Heart right ventricle (tissue), 16 donors: ENCODE measurements at regions of chr21 and their contacts with region 1.

Region 1: GRCh38 chr21:17819114-17819876 is at the start of gene C21orf91:
- DNase-seq: peak; percentile 92
- ATAC-seq: peak; percentile 97 to 100 (median 98)
- H3K4me3 ChIP-seq: peak within 1 kb of the TSS; percentile 81 to 98 (median 90)
- H3K27ac ChIP-seq: peak within 1 kb of the TSS; percentile 86 to 97 (median 92)
- H3K4me1 ChIP-seq: peaks cover 0 to 39% (median 30%) of the 10 kb centered on the region in 9 donors
- H3K27me3 ChIP-seq: no peaks in the 10 kb centered on the region
- CTCF ChIP-seq: no peak
- total RNA-seq, gene C21orf91: 6.2 to 18.9 (median 11.6) TPM

Region 2: DNA sequence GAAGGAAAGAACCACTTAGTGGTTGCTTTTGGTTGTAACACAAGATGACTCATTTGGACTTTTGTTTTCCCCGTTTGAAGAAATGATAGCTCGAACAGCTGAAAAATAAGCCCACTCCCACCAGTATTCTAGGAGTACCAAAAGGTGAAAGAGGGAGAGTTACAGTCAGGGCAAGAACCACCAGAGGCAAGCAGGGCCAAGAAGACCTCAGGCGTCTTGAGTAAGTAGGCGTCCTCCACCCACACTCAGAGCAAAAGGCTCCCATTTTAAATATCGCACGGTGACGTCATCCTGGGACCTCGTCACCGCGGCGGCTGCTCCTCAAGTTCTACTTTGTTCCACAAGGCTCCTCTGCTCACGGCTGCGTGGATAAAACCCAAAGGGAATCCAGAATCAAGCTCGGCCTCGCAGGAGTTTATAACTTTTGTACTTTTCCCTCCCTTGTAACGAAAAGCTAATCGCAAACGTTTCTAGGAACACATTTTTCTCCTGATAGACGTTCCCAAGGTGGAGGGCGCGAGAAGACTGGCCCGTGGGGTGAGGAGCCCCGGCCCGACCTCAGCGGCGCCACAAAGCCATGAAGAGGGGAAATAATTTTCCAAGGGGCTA is 207.8 kb before region 1 on chr21:
- intact Hi-C with region 1: loop called in 2 of 10 experiments (anchors 10 kb)
- DNase-seq: peak; percentile 59 to 81
- ATAC-seq: peak; percentile 57 to 90 (median 76)
- H3K4me3 ChIP-seq: peak overlapping the region; percentile 78 to 92 (median 84)
- H3K27ac ChIP-seq: peak overlapping the region in 9 of 10 donors; percentile 47 to 91 (median 85)
- H3K4me1 ChIP-seq: peaks cover 0 to 24% (median 11%) of the 10 kb centered on the region in 9 donors
- H3K27me3 ChIP-seq: peaks cover 0 to 2% (median 0%) of the 10 kb centered on the region in 7 donors
- CTCF ChIP-seq: peak in 1 of 9 donors; percentile 5

Region 3: DNA sequence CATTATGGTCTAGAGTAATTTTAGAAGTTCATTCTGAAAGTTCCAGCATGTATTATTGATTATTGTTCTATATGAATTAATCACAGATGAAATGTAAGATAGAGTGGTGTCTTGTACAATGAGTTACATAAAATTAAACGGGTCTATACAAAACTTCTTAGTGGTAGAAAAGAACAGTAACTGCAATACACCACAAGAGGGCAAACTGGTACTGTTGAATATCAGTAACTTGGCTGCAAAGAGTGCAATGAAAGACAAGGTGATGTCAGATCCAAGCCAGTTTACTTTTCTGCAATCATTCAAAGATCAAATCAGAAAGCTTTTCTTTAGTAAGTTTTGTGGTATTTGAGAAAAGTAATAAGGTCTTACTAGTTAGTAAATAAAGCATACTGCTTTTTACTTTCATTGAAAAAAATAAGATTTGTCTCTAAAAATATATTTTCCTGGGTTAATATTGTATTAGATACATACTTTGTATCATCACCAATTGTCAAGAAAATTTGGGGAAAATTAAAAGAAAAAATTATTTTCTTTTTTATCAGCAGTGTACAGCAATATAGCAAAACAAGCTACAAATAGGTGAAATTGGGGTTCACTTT is 140.2 kb before region 1 on chr21:
- intact Hi-C with region 1: loop called in 3 of 10 experiments (anchors 5 to 10 kb)
- DNase-seq: no peak
- ATAC-seq: peak in 7 of 8 donors; percentile 71 to 87 (median 78)
- H3K4me3 ChIP-seq: no peak overlapping the region
- H3K27ac ChIP-seq: no peak overlapping the region
- H3K4me1 ChIP-seq: no peaks in the 10 kb centered on the region
- H3K27me3 ChIP-seq: no peaks in the 10 kb centered on the region
- CTCF ChIP-seq: peak; percentile 65 to 91 (median 85)

Region 4: GRCh38 chr21:17688912-17689874 is 130.1 kb before region 1 on chr21:
- intact Hi-C with region 1: loop called in 4 of 10 experiments (anchors 5 to 10 kb)
- DNase-seq: peak; percentile 35 to 44
- ATAC-seq: peak in 5 of 8 donors; percentile 37 to 79 (median 73)
- H3K4me3 ChIP-seq: no peak overlapping the region
- H3K27ac ChIP-seq: peak overlapping the region in 3 of 10 donors; percentile 22 to 48 (median 27)
- H3K4me1 ChIP-seq: peaks cover 0 to 19% (median 12%) of the 10 kb centered on the region in 9 donors
- H3K27me3 ChIP-seq: no peaks in the 10 kb centered on the region
- CTCF ChIP-seq: peak in 6 of 9 donors; percentile 18 to 39 (median 22)

Region 5: GRCh38 chr21:17758657-17759056 is 60.6 kb before region 1 on chr21:
- intact Hi-C with region 1: no loop called
- DNase-seq: no peak
- ATAC-seq: peak in 6 of 8 donors; percentile 21 to 68 (median 44)
- H3K4me3 ChIP-seq: no peak overlapping the region
- H3K27ac ChIP-seq: peak overlapping the region in 1 of 10 donors; percentile 5
- H3K4me1 ChIP-seq: peaks cover 0 to 13% (median 0%) of the 10 kb centered on the region in 9 donors
- H3K27me3 ChIP-seq: no peaks in the 10 kb centered on the region
- CTCF ChIP-seq: no peak

Region 6: GRCh38 chr21:17903029-17903806 is 83.9 kb after region 1 on chr21:
- intact Hi-C with region 1: loop called in 4 of 10 experiments (anchors 1 to 10 kb)
- DNase-seq: no peak
- ATAC-seq: no peak
- H3K4me3 ChIP-seq: no peak overlapping the region
- H3K27ac ChIP-seq: no peak overlapping the region
- H3K4me1 ChIP-seq: peaks cover 0 to 24% (median 6%) of the 10 kb centered on the region in 9 donors
- H3K27me3 ChIP-seq: no peaks in the 10 kb centered on the region
- CTCF ChIP-seq: peak in 6 of 9 donors; percentile 42 to 57 (median 46)

Region 7: DNA sequence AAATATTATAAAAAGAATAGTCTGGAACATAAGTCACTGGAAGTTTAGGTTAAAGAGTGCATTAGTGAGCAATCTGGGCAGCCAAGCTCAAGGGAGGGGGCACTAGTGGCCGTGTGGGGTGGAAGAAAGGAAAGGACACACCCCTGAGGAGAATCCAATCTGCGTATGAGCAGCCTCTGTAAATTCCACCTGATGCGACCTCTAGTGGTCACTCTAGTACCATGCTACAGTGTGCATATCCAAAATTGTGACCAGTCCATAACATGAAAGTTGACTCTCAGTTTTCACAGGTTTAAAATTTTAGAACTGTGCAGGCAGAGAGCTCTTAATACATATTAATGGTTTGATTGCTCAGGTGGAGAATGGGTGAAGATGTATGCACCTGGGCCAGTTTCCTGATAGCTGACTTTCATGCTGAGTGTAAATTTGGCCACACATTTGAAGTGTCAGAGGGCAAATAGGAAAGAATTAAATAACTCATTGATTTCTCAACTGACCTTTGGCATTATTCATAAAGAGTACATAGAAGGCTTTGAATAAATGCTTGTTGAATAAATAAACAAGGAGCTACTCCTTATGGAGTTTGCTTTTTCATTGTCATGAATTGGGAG is 105.8 kb after region 1 on chr21:
- intact Hi-C with region 1: loop called in 1 of 10 experiments (anchors 10 kb)
- DNase-seq: peak in 1 of 2 donors; percentile 63
- ATAC-seq: peak; percentile 63 to 93 (median 84)
- H3K4me3 ChIP-seq: no peak overlapping the region
- H3K27ac ChIP-seq: no peak overlapping the region
- H3K4me1 ChIP-seq: peaks cover 0 to 11% (median 0%) of the 10 kb centered on the region in 9 donors
- H3K27me3 ChIP-seq: no peaks in the 10 kb centered on the region
- CTCF ChIP-seq: peak; percentile 69 to 92 (median 87)

Region 8: DNA sequence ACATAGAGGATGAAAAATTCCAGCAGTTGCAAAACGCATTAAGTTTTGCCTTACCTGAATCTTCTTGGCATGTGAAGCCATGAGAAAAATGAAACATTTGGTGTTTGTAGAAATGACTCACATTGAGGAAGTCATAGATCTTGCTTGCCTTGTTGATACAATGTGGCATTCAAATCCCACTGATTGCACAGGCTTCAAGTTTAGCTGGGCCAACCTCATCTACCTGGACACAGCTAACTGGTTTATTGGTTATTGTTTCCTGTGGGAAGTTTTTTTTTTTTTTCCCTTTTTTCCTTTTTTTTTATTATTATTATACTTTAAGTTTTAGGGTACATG is 168.8 kb after region 1 on chr21:
- intact Hi-C with region 1: no loop called
- DNase-seq: no peak
- ATAC-seq: no peak
- H3K4me3 ChIP-seq: no peak overlapping the region
- H3K27ac ChIP-seq: no peak overlapping the region
- H3K4me1 ChIP-seq: no peaks in the 10 kb centered on the region
- H3K27me3 ChIP-seq: no peaks in the 10 kb centered on the region
- CTCF ChIP-seq: no peak